Right ventricle myocardium inferior (tissue), 1 donor: ENCODE measurements at regions of chr20 and their contacts with region 1.

Region 1: DNA sequence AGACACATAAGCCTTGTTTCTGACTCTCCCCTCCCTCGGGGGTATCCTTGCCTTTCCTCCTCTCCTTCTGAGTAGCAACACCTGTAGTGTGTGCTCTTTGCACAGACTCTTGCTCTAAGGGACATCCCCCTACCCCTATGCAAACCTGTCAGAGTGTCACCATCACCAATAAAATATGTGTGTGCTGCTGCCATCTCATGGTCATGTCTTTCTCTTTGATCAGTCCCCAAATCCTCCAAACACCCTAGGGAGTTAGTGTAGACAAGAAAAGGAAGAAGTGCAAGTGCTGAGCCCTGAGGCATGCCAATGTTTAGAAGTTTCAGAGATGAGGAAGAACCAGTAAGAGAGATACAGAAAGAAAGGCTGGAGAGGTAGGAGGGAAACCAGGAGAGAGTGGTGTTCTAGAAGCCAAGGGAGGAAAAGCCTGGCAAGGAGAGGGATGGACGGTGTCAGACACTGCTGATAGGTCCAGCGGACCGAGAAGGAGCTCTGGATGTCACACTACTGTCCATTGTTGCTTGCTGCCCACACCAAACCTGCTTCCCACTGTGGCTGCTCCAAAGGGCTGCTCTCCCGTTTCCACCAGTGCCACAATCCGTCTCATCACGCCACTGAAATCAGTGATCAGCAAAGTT is 16.4 kb downstream of the TRMT6 start:
- DNase-seq: no peak
- ATAC-seq: peak; percentile 66

Region 2: GRCh38 chr20:5557123-5557522 is 376.8 kb before region 1 on chr20:
- intact Hi-C with region 1: loop called (anchors 10 kb)
- DNase-seq: no peak
- ATAC-seq: no peak

Region 3: DNA sequence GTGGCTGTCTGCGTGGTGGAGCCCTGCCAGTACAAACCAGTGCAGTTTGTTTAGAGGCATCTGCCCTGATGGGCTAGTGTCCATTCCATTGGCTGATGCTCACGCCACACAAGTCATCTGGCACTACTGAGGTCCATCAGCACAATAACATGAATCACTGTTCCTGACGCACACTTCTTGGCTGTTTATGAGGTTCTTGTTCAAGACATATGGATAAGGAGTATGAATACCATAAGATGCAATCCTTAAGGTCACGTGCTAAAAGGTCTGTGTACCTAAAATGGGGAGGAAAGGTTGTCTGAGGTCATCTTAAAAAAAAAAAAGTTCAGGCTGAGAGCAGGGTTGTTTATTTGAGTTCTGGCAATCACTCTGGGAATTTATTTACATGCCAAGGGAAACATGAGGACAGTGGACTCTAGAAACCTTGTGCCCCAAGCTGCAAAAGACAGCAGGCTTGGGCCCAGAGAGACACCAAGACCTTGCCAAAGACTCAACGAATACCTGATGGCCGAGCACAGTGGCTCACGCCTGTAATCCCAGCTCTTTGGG is 237.8 kb before region 1 on chr20:
- intact Hi-C with region 1: no loop called
- DNase-seq: no peak
- ATAC-seq: peak; percentile 74

Region 4: GRCh38 chr20:5806457-5807263 is 127.3 kb before region 1 on chr20:
- intact Hi-C with region 1: loop called (anchors 5 kb)
- DNase-seq: no peak
- ATAC-seq: peak; percentile 70